Breast epithelium (tissue), 4 donors: ENCODE measurements at regions of chrX and their contacts with region 1.

Region 1: DNA sequence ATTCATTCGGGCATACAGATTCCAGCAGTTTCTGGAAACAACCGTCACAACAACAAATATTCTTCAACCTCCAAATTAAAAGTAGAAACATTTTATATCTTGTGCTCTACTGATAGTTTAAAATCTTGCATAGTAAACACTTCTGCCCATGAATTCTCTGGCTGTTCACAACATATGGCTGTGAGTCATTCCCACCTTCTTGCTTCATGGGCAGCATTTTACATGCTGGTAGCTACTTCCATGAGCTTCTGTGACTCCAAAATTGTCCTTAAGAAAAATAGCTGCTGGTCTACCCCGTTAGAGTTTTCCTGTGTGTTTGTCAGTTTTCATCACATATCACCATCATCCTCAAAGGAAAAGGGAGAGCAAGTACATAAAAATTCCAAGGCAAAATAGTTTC is 22.7 kb downstream of the PNPLA4 start:
- DNase-seq: no peak
- H3K4me3 ChIP-seq: no peak overlapping the region
- H3K27ac ChIP-seq: no peak overlapping the region
- H3K4me1 ChIP-seq: no peaks in the 10 kb centered on the region
- H3K27me3 ChIP-seq: no peaks in the 10 kb centered on the region
- CTCF ChIP-seq: no peak
- POLR2A ChIP-seq: no peak

Region 2: GRCh38 chrX:6885909-6886308 is 1018.7 kb before region 1 on chrX:
- intact Hi-C with region 1: no loop called
- DNase-seq: no peak
- H3K4me3 ChIP-seq: no peak overlapping the region
- H3K27ac ChIP-seq: no peak overlapping the region
- H3K4me1 ChIP-seq: no peaks in the 10 kb centered on the region
- H3K27me3 ChIP-seq: no peaks in the 10 kb centered on the region
- CTCF ChIP-seq: no peak
- POLR2A ChIP-seq: no peak

Region 3: GRCh38 chrX:7852166-7852565 is 52.4 kb before region 1 on chrX:
- intact Hi-C with region 1: loop called (anchors 2 kb)
- DNase-seq: no peak
- H3K4me3 ChIP-seq: no peak overlapping the region
- H3K27ac ChIP-seq: no peak overlapping the region
- H3K4me1 ChIP-seq: no peaks in the 10 kb centered on the region
- H3K27me3 ChIP-seq: peaks cover 0 to 6% of the 10 kb centered on the region in 2 donors
- CTCF ChIP-seq: no peak
- POLR2A ChIP-seq: no peak